ENCODE measurements at regions of chr17 and their contacts with region 1.

Region 1: GRCh38 chr17:43400943-43401692 is 2.3 kb downstream of the ARL4D start:
- DNase-seq: no peak
- H3K4me3 ChIP-seq: peak overlapping the region; percentile 85 to 96
- H3K27ac ChIP-seq: peak overlapping the region; percentile 96
- H3K4me1 ChIP-seq: peaks cover 41% of the 10 kb centered on the region
- H3K27me3 ChIP-seq: no peaks in the 10 kb centered on the region
- CTCF ChIP-seq: no peak
- POLR2A ChIP-seq: no peak

Region 2: DNA sequence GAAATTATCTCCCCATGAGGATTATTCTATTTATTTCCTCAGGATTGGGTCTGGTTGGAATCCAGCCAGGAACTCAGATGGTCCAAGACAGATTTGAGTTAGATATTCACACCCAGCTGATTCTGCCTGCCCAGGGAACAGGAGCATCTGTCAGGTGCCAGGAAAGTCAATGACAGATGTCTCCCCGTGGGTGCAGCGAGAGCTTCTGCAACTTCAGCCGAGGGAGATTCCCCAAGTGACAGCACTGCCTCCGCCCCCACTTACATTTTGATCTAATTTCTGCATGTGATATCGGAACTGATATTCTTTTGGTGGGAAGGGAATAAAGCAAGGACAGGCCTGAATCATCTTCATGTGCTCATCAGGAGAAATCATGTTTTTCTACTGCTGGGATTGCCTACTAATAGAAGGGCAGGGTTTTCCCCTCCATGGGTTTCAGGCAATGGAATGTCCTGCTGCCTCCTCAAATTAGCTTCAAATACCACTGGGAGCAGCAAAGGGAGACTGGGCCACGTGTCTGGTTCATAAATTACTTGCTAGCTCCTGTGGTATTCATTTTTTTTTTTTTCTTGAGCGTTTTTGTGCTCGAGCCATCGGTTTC is 67.0 kb after region 1 on chr17:
- intact Hi-C with region 1: loop called (anchors 10 kb)
- DNase-seq: no peak
- H3K4me3 ChIP-seq: no peak overlapping the region
- H3K27ac ChIP-seq: peak overlapping the region; percentile 76
- H3K4me1 ChIP-seq: peaks cover 24% of the 10 kb centered on the region
- H3K27me3 ChIP-seq: no peaks in the 10 kb centered on the region
- CTCF ChIP-seq: no peak
- POLR2A ChIP-seq: no peak

Measured in vagina (tissue), 2 donors.